ENCODE measurements at regions of chr7 and their contacts with region 1.

Region 1: GRCh38 chr7:106947244-106947728 is 82.2 kb downstream of the PIK3CG start:
- DNase-seq: peak; percentile 72
- ATAC-seq: peak; percentile 87
- H3K4me3 ChIP-seq: no peak overlapping the region
- H3K27ac ChIP-seq: no peak overlapping the region
- H3K4me1 ChIP-seq: no peaks in the 10 kb centered on the region
- H3K27me3 ChIP-seq: peaks cover 48% of the 10 kb centered on the region
- CTCF ChIP-seq: peak; percentile 78

Region 2: DNA sequence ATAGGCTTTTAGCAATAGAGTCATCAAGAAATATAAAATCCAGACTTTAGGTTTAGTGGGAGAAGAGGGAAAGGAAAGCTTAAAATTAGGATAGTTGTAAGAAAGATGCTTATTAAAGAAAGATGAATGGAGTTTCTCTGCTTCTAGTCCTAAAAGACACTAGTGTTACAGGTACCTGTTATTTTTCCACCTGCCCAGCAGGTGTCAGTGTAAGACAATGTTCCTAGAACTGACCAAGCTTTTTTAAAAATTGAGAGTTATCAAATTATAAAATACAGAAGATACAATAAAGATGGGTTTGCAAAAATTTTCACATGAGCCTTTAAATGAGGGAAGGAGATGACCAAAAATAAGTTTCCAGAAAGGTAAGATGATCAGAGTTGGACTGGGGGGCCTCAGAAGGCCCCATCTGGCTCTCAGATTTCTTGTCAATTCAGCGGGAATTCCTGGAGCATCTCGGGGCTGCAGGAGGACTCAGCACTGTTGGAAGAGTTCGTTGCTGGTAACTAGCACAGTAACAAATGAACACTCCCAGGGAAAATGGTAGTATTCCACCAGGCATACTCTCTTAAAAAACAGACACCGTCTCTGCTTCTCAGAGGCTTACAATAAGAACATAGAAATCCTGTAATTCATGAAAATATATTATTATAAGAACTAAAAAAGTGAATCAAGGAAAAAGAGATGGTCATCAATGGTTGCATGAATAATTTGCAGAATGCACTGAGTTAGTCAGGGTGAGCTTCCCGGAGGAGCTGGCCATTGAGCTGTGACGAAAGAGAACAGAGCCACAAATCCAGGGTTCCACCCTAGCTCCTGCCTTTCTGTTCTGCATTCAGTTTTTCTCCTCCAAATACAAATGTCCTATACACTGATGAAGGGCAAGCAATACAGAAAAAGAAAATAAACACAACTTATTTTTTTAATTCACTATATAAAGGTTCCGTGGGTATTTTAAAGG is 154.0 kb before region 1 on chr7:
- CTCF ChIA-PET with region 1: no interaction called
- POLR2A ChIA-PET with region 1: no interaction called
- intact Hi-C with region 1: loop called (anchors 2 kb)
- DNase-seq: peak; percentile 55
- ATAC-seq: peak; percentile 42; the same call in 1 of the 2 replicates
- H3K4me3 ChIP-seq: no peak overlapping the region
- H3K27ac ChIP-seq: no peak overlapping the region
- H3K4me1 ChIP-seq: peaks cover 3% of the 10 kb centered on the region; the same call in 1 of the 2 replicates
- H3K27me3 ChIP-seq: no peaks in the 10 kb centered on the region
- CTCF ChIP-seq: peak; percentile 79

Region 3: DNA sequence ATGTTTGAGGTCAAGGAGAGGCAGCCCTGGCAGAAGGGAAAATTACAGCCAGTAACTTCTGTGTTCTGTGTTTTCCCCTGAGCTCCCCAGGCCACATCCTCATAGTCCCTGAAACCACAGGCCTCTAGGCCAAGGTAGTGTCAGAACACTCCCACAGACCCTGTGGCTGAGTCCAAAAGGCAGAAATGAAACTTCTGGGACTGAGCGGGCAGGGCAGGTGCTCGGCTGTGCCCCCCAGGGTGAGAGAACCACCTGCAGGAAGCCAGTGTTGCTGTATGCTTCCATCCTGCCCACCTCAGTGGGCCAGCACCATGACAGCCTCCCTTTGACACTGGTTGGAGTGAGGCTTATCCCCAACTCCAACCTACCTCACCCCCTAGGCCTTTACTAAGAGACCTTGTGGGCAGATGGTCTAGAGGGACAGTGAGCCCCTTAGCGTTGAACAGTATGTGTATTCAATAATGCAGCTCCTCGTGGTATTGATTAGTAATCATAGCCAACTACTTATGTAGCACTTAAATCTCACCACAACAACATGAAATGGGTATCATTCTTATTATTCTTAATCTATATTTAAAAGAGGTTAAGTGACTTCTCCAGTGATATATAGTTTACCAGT is 51.9 kb before region 1 on chr7:
- CTCF ChIA-PET with region 1: no interaction called
- POLR2A ChIA-PET with region 1: no interaction called
- intact Hi-C with region 1: no loop called
- DNase-seq: no peak
- ATAC-seq: no peak
- H3K4me3 ChIP-seq: no peak overlapping the region
- H3K27ac ChIP-seq: no peak overlapping the region
- H3K4me1 ChIP-seq: no peaks in the 10 kb centered on the region
- H3K27me3 ChIP-seq: no peaks in the 10 kb centered on the region
- CTCF ChIP-seq: no peak

Region 4: DNA sequence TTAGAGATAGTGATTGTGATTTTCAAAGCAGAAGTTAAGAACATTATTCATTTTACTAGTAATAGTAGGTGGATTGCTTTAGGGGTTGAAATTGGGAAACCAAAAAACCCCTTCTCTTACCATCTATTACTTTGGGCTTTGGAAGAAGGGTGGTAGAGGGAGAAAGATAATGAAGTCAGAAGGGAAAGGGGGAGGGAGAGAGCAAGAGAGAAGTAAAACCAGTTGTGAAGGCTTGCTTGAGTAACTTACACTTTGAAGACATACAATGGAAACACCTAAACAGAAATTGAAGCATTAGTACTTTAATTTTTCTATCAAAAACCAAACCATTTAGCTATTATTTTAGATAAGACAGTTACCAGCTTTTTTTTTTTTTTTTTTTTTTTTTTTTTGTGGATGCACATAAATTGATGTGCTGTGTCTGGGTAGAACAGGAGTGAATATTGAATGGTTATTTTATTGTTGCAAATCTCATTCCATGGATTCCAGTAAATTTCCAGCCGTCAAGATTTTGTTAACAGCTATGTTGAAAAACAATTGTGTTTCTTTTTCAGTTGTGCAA is 102.8 kb after region 1 on chr7:
- CTCF ChIA-PET with region 1: interaction called, 11 read pairs
- POLR2A ChIA-PET with region 1: no interaction called
- intact Hi-C with region 1: no loop called
- DNase-seq: no peak
- ATAC-seq: no peak
- H3K4me3 ChIP-seq: no peak overlapping the region
- H3K27ac ChIP-seq: no peak overlapping the region
- H3K4me1 ChIP-seq: peaks cover 24% of the 10 kb centered on the region
- H3K27me3 ChIP-seq: peaks cover 40% of the 10 kb centered on the region
- CTCF ChIP-seq: no peak